T-cell (primary cell): ENCODE measurements at regions of chr12 and their contacts with region 1.

Region 1: GRCh38 chr12:98403385-98403784 is 112.0 kb upstream of the TMPO start:
- DNase-seq: no peak
- ATAC-seq: no peak
- H3K4me3 ChIP-seq: no peak overlapping the region
- H3K4me3 Mint-ChIP-seq: no peak overlapping the region
- H3K27ac ChIP-seq: no peak overlapping the region
- H3K27ac Mint-ChIP-seq: no peak overlapping the region
- H3K4me1 ChIP-seq: peaks cover 0 to 6% of the 10 kb centered on the region in 2 experiments
- H3K4me1 Mint-ChIP-seq: peaks cover 15 to 26% (median 21%) of the 10 kb centered on the region in 3 donors
- H3K27me3 ChIP-seq: no peaks in the 10 kb centered on the region
- H3K27me3 Mint-ChIP-seq: no peaks in the 10 kb centered on the region

Region 2: GRCh38 chr12:98416845-98417244 is 13.5 kb after region 1 on chr12:
- CTCF ChIA-PET with region 1: no interaction called
- POLR2A ChIA-PET with region 1: interaction called in 1 of 2 experiments, 16 read pairs
- DNase-seq: peak in 1 of 35 experiments; percentile 11
- ATAC-seq: no peak
- H3K4me3 ChIP-seq: no peak overlapping the region
- H3K4me3 Mint-ChIP-seq: no peak overlapping the region
- H3K27ac ChIP-seq: no peak overlapping the region
- H3K27ac Mint-ChIP-seq: no peak overlapping the region
- H3K4me1 ChIP-seq: no peaks in the 10 kb centered on the region
- H3K4me1 Mint-ChIP-seq: no peaks in the 10 kb centered on the region
- H3K27me3 ChIP-seq: peaks cover 0 to 8% of the 10 kb centered on the region in 2 experiments
- H3K27me3 Mint-ChIP-seq: peaks cover 5 to 9% of the 10 kb centered on the region in 2 donors